Astrocyte of the cerebellum (primary cell): ENCODE measurements at regions of chr12 and their contacts with region 1.

Region 1: GRCh38 chr12:50066433-50066832 is 9.0 kb downstream of the ASIC1 start:
- DNase-seq: no peak
- H3K4me3 ChIP-seq: no peak overlapping the region
- CTCF ChIP-seq: no peak

Region 2: GRCh38 chr12:49967042-49967776 is 99.2 kb before region 1 on chr12:
- in situ Hi-C with region 1: loop called (anchors 5 kb)
- DNase-seq: peak; percentile 62
- H3K4me3 ChIP-seq: peak overlapping the region; percentile 33
- CTCF ChIP-seq: peak; percentile 81

Region 3: GRCh38 chr12:50025187-50026059 is 41.0 kb before region 1 on chr12 and contains the start of gene RACGAP1:
- in situ Hi-C with region 1: no loop called
- DNase-seq: peak; percentile 98
- H3K4me3 ChIP-seq: peak within 1 kb of the TSS; percentile 82
- CTCF ChIP-seq: no peak